Prostate gland (tissue), 2 donors: ENCODE measurements at regions of chr13 and their contacts with region 1.

Region 1: DNA sequence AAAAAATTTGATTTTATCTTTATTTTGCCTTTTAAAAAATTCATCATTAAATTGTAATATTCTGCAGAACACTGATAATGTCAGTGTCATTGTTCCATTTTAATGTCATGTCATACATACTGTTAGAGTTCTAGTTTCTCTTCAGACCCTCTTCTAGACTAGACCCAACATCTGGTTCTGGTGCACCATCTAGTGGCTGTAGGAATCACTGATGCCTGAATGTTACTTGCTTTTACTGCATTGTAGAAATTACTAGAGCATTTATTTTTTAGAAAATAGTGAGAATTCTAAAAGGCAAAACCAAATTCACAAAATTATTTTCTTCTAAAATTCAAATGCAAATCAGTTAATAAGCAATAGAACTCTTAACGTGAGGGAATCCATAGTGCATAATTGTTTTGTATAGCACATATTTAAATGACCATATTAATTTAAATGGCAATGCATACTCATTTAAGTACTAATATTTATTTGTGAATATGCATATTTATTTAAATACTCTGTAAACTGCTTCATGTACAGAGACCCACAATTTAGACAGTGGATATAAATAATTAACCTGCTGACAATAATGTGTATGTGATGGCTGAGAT is 425.7 kb downstream of the KLF12 start:
- DNase-seq: peak; percentile 44
- H3K4me3 ChIP-seq: no peak overlapping the region
- H3K27ac ChIP-seq: no peak overlapping the region
- H3K4me1 ChIP-seq: no peaks in the 10 kb centered on the region
- H3K27me3 ChIP-seq: no peaks in the 10 kb centered on the region
- CTCF ChIP-seq: peak; percentile 39 to 92 (median 76)
- POLR2A ChIP-seq: no peak

Region 2: DNA sequence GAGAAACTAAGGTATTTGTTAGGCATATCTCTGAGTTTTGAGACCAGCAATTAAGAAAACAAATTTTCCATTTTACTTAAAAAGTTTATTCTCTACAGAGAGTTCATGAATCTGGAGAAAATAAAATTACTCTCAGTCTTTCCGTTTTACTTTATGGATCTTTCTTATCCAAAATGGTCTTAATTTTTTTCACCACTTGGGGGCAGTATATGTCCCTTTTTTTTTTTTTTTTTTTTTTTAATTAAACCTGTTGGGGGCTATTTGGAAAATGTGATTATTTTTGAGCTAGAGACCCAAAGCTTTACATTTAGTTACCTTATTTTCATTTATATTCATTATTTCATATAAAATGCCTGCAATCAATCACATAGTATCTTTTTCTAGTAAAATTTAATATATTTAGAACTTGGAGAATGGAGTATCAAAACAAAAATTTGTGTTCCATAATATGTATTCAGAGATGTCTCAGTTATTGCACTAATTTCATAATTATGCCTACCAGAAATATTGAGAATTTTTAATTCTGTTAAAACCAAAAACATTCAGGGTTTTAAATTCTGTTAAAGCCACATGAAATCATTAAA is 899.5 kb before region 1 on chr13:
- intact Hi-C with region 1: loop called (anchors 10 kb)
- DNase-seq: no peak
- H3K4me3 ChIP-seq: no peak overlapping the region
- H3K27ac ChIP-seq: no peak overlapping the region
- H3K4me1 ChIP-seq: no peaks in the 10 kb centered on the region
- H3K27me3 ChIP-seq: no peaks in the 10 kb centered on the region
- CTCF ChIP-seq: peak in 2 of 4 experiments; percentile 40 to 46
- POLR2A ChIP-seq: no peak

Region 3: GRCh38 chr13:73273741-73274140 is 434.7 kb before region 1 on chr13:
- intact Hi-C with region 1: no loop called
- DNase-seq: no peak
- H3K4me3 ChIP-seq: no peak overlapping the region
- H3K27ac ChIP-seq: no peak overlapping the region
- H3K4me1 ChIP-seq: no peaks in the 10 kb centered on the region
- H3K27me3 ChIP-seq: no peaks in the 10 kb centered on the region
- CTCF ChIP-seq: no peak
- POLR2A ChIP-seq: no peak

Region 4: GRCh38 chr13:73385848-73386247 is 322.6 kb before region 1 on chr13:
- intact Hi-C with region 1: no loop called
- DNase-seq: no peak
- H3K4me3 ChIP-seq: no peak overlapping the region
- H3K27ac ChIP-seq: no peak overlapping the region
- H3K4me1 ChIP-seq: no peaks in the 10 kb centered on the region
- H3K27me3 ChIP-seq: no peaks in the 10 kb centered on the region
- CTCF ChIP-seq: no peak
- POLR2A ChIP-seq: no peak